GM13977 (cell line): ENCODE measurements at regions of chrX and their contacts with region 1.

Region 1: DNA sequence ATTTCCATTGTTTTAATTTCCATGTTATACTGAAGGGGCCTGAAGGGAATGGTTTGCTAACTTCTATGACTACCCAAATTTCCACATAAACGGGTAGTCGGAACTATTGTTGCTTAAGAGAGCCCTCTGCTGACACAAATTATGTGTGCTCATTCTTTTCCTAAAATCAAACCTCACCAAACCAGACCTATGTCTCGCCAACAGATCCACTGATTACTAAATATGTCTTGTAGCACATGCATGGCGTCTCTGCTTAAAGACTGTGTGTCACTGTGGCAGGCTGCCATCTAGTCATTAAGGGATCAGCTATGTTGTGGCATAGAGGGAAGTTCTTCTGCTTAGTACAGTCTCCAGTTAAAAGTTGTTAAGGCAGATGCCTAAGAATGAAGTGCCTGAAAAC is 25.1 kb downstream of the PIR start:
- DNase-seq: no peak
- CTCF ChIP-seq: peak; percentile 55

Region 2: GRCh38 chrX:15349046-15349445 is 119.0 kb before region 1 on chrX:
- in situ Hi-C with region 1: loop called (anchors 10 kb)
- DNase-seq: peak; percentile 51
- CTCF ChIP-seq: peak; percentile 63